CD8-positive, alpha-beta T cell (primary cell): ENCODE measurements at regions of chr2 and their contacts with region 1.

Region 1: GRCh38 chr2:112054847-112055729 is at the start of gene TMEM87B:
- DNase-seq: peak; percentile 93 to 98 (median 97)
- ATAC-seq: peak; percentile 67
- H3K4me3 ChIP-seq: peak within 1 kb of the TSS; percentile 92 to 95
- H3K4me3 Mint-ChIP-seq: peak within 1 kb of the TSS; percentile 96
- H3K27ac ChIP-seq: peak within 1 kb of the TSS; percentile 71 to 93
- H3K27ac Mint-ChIP-seq: peak within 1 kb of the TSS; percentile 97
- H3K4me1 ChIP-seq: peaks cover 19% of the 10 kb centered on the region
- H3K4me1 Mint-ChIP-seq: peaks cover 46% of the 10 kb centered on the region
- H3K27me3 ChIP-seq: no peaks in the 10 kb centered on the region
- H3K27me3 Mint-ChIP-seq: no peaks in the 10 kb centered on the region
- CTCF ChIP-seq: no peak
- total RNA-seq, gene TMEM87B: 5.4 to 7.5 TPM

Region 2: GRCh38 chr2:110677530-110678456 is 1377.3 kb before region 1 on chr2 and contains the start of gene BUB1:
- CTCF ChIA-PET with region 1: no interaction called
- POLR2A ChIA-PET with region 1: no interaction called
- intact Hi-C with region 1: loop called in 1 of 2 experiments (anchors 5 kb)
- DNase-seq: peak; percentile 87 to 98 (median 95)
- ATAC-seq: peak; percentile 95
- H3K4me3 ChIP-seq: peak within 1 kb of the TSS; percentile 65 to 91
- H3K4me3 Mint-ChIP-seq: peak within 1 kb of the TSS; percentile 96
- H3K27ac ChIP-seq: peak within 1 kb of the TSS; percentile 66 to 67
- H3K27ac Mint-ChIP-seq: peak within 1 kb of the TSS; percentile 93
- H3K4me1 ChIP-seq: peaks cover 13% of the 10 kb centered on the region
- H3K4me1 Mint-ChIP-seq: peaks cover 27% of the 10 kb centered on the region
- H3K27me3 ChIP-seq: peaks cover 0 to 2% of the 10 kb centered on the region in 2 experiments
- H3K27me3 Mint-ChIP-seq: no peaks in the 10 kb centered on the region
- CTCF ChIP-seq: no peak
- total RNA-seq, gene BUB1: 2.4 to 3.1 TPM

Region 3: GRCh38 chr2:111883661-111884591 is 171.2 kb before region 1 on chr2 and contains the start of gene ANAPC1:
- CTCF ChIA-PET with region 1: interaction called, 14 read pairs
- POLR2A ChIA-PET with region 1: interaction called, 3 read pairs
- intact Hi-C with region 1: loop called in 1 of 2 experiments (anchors 1 kb)
- DNase-seq: peak; percentile 69 to 91 (median 86)
- ATAC-seq: peak; percentile 96
- H3K4me3 ChIP-seq: peak within 1 kb of the TSS; percentile 75 to 82
- H3K4me3 Mint-ChIP-seq: peak within 1 kb of the TSS; percentile 96
- H3K27ac ChIP-seq: peak within 1 kb of the TSS; percentile 76 to 81
- H3K27ac Mint-ChIP-seq: peak within 1 kb of the TSS; percentile 98
- H3K4me1 ChIP-seq: peaks cover 8% of the 10 kb centered on the region
- H3K4me1 Mint-ChIP-seq: peaks cover 14% of the 10 kb centered on the region
- H3K27me3 ChIP-seq: no peaks in the 10 kb centered on the region
- H3K27me3 Mint-ChIP-seq: no peaks in the 10 kb centered on the region
- CTCF ChIP-seq: no peak
- total RNA-seq, gene ANAPC1: 39.6 to 43.9 TPM

Region 4: DNA sequence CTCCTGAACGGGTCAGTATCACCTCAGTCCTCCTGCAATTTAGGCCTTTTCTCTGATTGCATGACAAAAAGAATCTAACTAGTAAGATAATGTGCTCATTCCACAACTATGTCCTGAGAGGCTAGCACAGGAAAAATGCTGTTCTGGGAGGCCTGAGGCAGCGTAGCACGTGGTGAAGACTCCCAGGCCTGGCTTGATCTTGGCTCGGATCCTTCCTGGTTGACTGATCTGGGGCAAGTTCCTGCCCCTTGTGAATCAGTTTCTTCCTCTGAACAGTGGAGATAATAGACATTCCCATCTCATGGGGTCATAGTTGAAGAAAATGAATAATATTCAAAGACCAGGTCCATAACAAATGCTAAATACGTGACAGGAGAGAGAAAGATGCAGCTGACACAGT is 95.4 kb after region 1 on chr2:
- CTCF ChIA-PET with region 1: no interaction called
- POLR2A ChIA-PET with region 1: no interaction called
- intact Hi-C with region 1: no loop called
- DNase-seq: peak in 1 of 9 experiments; percentile 7
- ATAC-seq: no peak
- H3K4me3 ChIP-seq: no peak overlapping the region
- H3K4me3 Mint-ChIP-seq: no peak overlapping the region
- H3K27ac ChIP-seq: no peak overlapping the region
- H3K27ac Mint-ChIP-seq: no peak overlapping the region
- H3K4me1 ChIP-seq: peaks cover 11% of the 10 kb centered on the region
- H3K4me1 Mint-ChIP-seq: peaks cover 10% of the 10 kb centered on the region
- H3K27me3 ChIP-seq: no peaks in the 10 kb centered on the region
- H3K27me3 Mint-ChIP-seq: peaks cover 2% of the 10 kb centered on the region
- CTCF ChIP-seq: no peak

Region 5: DNA sequence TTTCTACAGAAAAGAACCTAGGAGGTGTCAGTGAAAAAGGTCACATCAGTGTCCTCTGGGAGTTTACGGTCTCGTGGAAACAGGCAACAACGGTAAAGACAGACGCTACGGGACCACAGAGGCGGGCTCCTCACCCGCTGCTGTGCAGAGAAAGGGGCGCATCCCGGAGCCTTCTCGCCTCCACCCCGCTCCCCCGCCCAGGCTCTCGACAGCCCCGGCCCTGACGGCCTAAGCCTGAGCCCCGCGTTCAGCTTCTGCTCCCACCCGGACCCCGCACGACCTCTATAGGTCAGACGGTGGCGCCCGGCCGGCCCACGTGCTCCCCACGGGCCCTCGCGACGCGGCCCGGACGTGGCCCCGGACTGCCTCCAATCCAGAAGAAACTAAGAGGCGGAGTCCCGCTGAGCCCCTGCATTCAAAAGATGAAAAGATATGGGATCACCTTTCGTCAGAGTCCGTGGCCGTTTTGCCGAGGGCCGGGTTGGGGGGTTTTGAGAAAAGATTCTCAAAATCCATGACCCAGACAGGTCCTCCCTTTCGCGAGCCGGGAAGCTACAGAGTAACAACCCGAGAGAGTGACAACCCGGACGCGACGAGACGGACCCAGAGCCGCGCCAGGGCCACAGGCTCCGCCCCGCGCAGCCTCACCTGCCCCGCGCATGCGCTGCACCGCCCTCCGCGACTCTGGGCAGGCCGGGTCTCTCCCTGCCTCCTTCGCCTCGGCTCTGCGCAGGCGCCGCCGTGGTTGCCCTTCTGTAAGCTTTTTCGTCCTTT is 199.6 kb after region 1 on chr2 and contains the start of gene ZC3H8:
- CTCF ChIA-PET with region 1: no interaction called
- POLR2A ChIA-PET with region 1: interaction called, 4 read pairs
- intact Hi-C with region 1: loop called (anchors 1 to 2 kb)
- DNase-seq: peak; percentile 90 to 98 (median 96)
- ATAC-seq: peak; percentile 91
- H3K4me3 ChIP-seq: peak within 1 kb of the TSS; percentile 61 to 74
- H3K4me3 Mint-ChIP-seq: peak within 1 kb of the TSS; percentile 88
- H3K27ac ChIP-seq: peak within 1 kb of the TSS; percentile 87 to 95
- H3K27ac Mint-ChIP-seq: peak within 1 kb of the TSS; percentile 93
- H3K4me1 ChIP-seq: peaks cover 26% of the 10 kb centered on the region
- H3K4me1 Mint-ChIP-seq: peaks cover 19% of the 10 kb centered on the region
- H3K27me3 ChIP-seq: no peaks in the 10 kb centered on the region
- H3K27me3 Mint-ChIP-seq: no peaks in the 10 kb centered on the region
- CTCF ChIP-seq: no peak
- total RNA-seq, gene ZC3H8: 11.1 to 11.7 TPM

Region 6: GRCh38 chr2:112542123-112542983 is 487.3 kb after region 1 on chr2 and contains the start of gene POLR1B:
- CTCF ChIA-PET with region 1: no interaction called
- POLR2A ChIA-PET with region 1: no interaction called
- intact Hi-C with region 1: loop called (anchors 1 to 2 kb)
- DNase-seq: peak in 8 of 9 experiments; percentile 56 to 86 (median 75)
- ATAC-seq: peak; percentile 78
- H3K4me3 ChIP-seq: peak within 1 kb of the TSS; percentile 90
- H3K4me3 Mint-ChIP-seq: no peak within 1 kb of the TSS
- H3K27ac ChIP-seq: peak within 1 kb of the TSS; percentile 90 to 96
- H3K27ac Mint-ChIP-seq: no peak within 1 kb of the TSS
- H3K4me1 ChIP-seq: peaks cover 17% of the 10 kb centered on the region
- H3K4me1 Mint-ChIP-seq: peaks cover 26% of the 10 kb centered on the region
- H3K27me3 ChIP-seq: no peaks in the 10 kb centered on the region
- H3K27me3 Mint-ChIP-seq: no peaks in the 10 kb centered on the region
- CTCF ChIP-seq: no peak
- total RNA-seq, gene POLR1B: 10.0 to 11.0 TPM

Region 7: GRCh38 chr2:112764071-112765044 is 709.3 kb after region 1 on chr2 and contains the start of gene CKAP2L:
- CTCF ChIA-PET with region 1: no interaction called
- POLR2A ChIA-PET with region 1: no interaction called
- intact Hi-C with region 1: loop called in 1 of 2 experiments (anchors 1 kb)
- DNase-seq: peak; percentile 85 to 98 (median 94)
- ATAC-seq: peak; percentile 98
- H3K4me3 ChIP-seq: peak within 1 kb of the TSS; percentile 72 to 74
- H3K4me3 Mint-ChIP-seq: peak within 1 kb of the TSS; percentile 92
- H3K27ac ChIP-seq: peak within 1 kb of the TSS; percentile 5 to 54
- H3K27ac Mint-ChIP-seq: peak within 1 kb of the TSS; percentile 70
- H3K4me1 ChIP-seq: peaks cover 12% of the 10 kb centered on the region
- H3K4me1 Mint-ChIP-seq: peaks cover 27% of the 10 kb centered on the region
- H3K27me3 ChIP-seq: no peaks in the 10 kb centered on the region
- H3K27me3 Mint-ChIP-seq: no peaks in the 10 kb centered on the region
- CTCF ChIP-seq: no peak
- total RNA-seq, gene CKAP2L: 0.50 to 0.57 TPM